ENCODE measurements at regions of chr2 and their contacts with region 1.

Region 1: GRCh38 chr2:209577376-209578357 is 153.8 kb downstream of the MAP2 start:
- DNase-seq: no peak
- H3K4me3 ChIP-seq: no peak overlapping the region
- H3K27ac ChIP-seq: no peak overlapping the region
- H3K27me3 ChIP-seq: no peaks in the 10 kb centered on the region
- CTCF ChIP-seq: peak; percentile 38

Region 2: GRCh38 chr2:209536363-209536762 is 41.3 kb before region 1 on chr2:
- CTCF ChIA-PET with region 1: interaction called, 16 read pairs
- POLR2A ChIA-PET with region 1: no interaction called
- DNase-seq: no peak
- H3K4me3 ChIP-seq: no peak overlapping the region
- H3K27ac ChIP-seq: no peak overlapping the region
- H3K27me3 ChIP-seq: no peaks in the 10 kb centered on the region
- CTCF ChIP-seq: no peak

Region 3: GRCh38 chr2:209556354-209556961 is 21.2 kb before region 1 on chr2:
- CTCF ChIA-PET with region 1: interaction called, 17 read pairs
- POLR2A ChIA-PET with region 1: no interaction called
- DNase-seq: peak; percentile 8
- H3K4me3 ChIP-seq: no peak overlapping the region
- H3K27ac ChIP-seq: no peak overlapping the region
- H3K27me3 ChIP-seq: no peaks in the 10 kb centered on the region
- CTCF ChIP-seq: peak; percentile 75

Measured in AG04450 (cell line).